Left ventricle myocardium inferior (tissue), 1 donor: ENCODE measurements at regions of chr2 and their contacts with region 1.

Region 1: DNA sequence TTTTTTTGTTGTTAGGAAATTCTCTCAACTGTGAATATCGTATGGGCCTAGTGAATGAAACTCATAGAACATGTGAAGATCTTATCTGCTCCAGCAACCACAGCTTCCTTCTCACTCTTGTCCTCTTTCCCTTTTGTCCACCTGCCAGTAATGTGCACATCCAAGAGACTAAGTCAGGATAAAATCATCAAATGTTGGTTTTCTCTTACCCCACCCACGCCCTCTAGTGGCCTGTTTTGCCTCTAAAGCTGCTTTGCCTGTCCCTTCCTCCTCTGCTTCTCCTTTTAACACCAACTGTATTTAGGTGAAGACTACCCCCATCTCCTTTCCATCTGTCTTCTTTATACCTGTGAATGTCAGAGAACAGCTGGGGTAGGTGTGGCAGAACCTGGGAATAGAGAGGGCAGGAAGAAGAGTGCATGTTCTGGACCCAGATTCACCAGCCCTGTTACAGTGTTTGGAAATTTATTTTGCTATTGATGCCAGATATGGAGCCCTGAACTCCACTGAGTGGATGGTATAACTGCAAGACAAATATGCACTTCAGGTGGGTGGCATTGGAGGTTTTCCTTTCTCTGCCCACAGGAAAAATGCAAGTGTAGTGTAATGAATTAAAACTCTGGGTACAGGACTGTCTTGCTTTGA is 8.4 kb upstream of the MGAT5 start:
- DNase-seq: peak; percentile 72
- H3K4me3 ChIP-seq: no peak overlapping the region
- H3K27ac ChIP-seq: peak overlapping the region; percentile 36
- H3K4me1 ChIP-seq: peaks cover 91% of the 10 kb centered on the region
- H3K27me3 ChIP-seq: no peaks in the 10 kb centered on the region
- CTCF ChIP-seq: peak; percentile 73

Region 2: DNA sequence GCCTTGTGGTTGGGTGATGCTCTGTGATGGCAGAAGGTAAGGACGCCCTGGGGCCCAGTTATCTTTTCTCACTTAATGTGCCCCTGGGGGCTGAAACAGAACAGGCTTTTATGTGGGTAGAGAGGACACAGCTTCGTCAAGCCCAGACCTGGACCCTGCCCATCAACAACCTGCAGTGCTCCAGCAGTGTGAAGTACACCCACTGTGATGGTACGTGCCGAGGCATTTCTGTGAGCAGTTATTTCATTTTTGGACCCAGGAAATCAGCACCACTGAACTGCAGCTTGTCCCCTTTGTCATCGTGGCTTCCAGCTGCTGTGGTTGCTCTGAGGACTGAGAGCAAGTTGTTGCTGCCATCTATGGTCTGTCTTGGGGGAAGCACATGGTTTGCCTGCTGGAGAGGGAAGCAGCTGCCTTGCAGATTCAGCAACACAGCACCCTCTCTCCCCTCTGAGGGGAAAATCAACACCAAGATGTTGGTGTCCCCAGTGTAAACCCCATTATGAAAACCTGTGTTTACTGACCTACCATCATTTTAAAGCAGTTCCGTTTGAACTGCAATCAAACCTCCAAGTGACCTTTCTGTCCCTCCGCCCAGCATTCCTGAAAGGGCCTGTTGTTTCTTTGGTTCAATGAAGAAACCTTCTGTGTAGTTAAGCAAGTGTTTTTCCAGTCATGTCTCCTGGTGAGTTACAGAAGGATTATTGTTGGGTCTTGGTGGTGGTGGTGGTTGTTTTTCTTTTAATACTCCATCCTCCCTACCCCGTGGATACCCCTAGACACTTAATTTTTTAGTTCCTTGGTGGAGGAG is 166.6 kb after region 1 on chr2:
- intact Hi-C with region 1: loop called (anchors 10 kb)
- DNase-seq: peak; percentile 47
- H3K4me3 ChIP-seq: no peak overlapping the region
- H3K27ac ChIP-seq: peak overlapping the region; percentile 67
- H3K4me1 ChIP-seq: peaks cover 53% of the 10 kb centered on the region
- H3K27me3 ChIP-seq: no peaks in the 10 kb centered on the region
- CTCF ChIP-seq: peak; percentile 81